GM12878 (cell line): ENCODE measurements at regions of chr22 and their contacts with region 1.

Region 1: DNA sequence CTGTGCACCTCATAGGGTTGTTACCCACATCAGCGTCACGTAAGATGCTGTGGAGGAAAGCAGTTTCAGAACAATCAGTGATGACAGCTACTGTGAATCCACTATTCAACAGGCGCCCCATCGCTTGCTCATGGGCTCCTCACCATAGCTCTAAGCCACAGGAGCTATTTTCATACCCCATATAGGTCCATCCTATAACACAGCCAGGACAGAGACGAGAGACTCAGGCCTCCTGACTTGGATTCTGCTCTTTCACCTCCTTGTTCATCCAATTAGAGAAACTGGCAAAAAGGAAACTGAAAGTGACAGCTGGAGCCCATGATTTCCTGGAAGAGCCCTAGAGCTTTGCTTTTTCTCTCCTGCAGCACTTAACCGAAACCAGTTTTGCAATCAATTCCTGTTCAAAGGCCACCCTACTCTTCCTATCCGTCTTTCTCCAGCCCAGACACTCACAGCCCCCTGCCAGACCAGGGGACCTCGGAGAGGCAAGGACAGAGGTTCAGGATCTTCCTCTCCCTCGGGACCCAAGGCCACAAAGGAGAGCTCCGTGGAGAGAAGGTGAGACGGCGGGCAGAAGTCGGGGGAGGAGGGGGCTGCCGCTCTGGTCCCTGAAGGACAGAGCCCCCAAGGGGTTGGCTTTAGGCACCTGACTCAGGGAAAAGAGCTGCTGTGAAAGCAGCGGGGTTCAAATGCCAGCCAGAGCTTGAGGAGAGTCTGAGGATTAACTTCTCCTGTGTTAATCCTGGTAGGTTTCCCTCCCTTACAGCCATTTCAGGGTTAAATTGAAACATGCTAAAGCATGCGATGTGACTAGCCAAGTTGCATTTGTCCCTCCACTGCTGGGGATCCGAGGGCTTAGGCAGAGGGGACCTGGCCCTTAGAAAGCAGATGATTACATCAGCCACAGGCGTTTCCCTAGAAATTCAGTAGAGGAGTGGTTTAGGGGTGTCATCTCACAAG is at the start of gene APOL6:
- DNase-seq: peak; percentile 65
- ATAC-seq: peak; percentile 79
- H3K4me3 ChIP-seq: peak within 1 kb of the TSS; percentile 91
- H3K27ac ChIP-seq: peak within 1 kb of the TSS; percentile 93
- H3K4me1 ChIP-seq: peaks cover 19% of the 10 kb centered on the region
- H3K27me3 ChIP-seq: no peaks in the 10 kb centered on the region
- CTCF ChIP-seq: no peak
- EP300 ChIP-seq: no peak
- POLR2A ChIP-seq: peak; percentile 65
- RAD21 ChIP-seq: no peak
- polyA plus RNA-seq, gene APOL6: 4.3 to 6.7 TPM

Region 2: DNA sequence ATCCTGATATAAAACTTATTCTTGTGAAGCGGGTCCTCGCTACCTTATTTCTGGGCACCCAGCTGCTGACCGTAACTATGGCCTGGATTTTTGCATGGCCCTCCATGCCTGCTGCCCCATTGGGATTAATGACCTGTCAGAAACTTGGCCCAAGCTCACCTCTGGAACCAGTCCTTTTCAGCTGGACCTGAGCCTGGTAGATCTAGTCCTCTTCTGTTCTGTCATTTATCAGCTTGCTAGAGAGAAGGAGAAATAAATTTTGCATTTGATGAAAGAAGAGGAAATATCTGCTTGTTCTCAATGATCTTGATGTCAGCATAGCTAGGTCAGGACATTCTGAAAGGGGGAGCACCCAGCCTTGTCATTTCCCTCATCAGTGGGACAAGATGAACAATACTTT is 1340.2 kb before region 1 on chr22:
- CTCF ChIA-PET with region 1: no interaction called
- POLR2A ChIA-PET with region 1: no interaction called
- RAD21 ChIA-PET with region 1: no interaction called
- SMC1A ChIA-PET with region 1: no interaction called
- in situ Hi-C with region 1: no loop called
- intact Hi-C with region 1: no loop called
- DNase-seq: no peak
- ATAC-seq: no peak
- H3K4me3 ChIP-seq: no peak overlapping the region
- H3K27ac ChIP-seq: no peak overlapping the region
- H3K4me1 ChIP-seq: no peaks in the 10 kb centered on the region
- H3K27me3 ChIP-seq: no peaks in the 10 kb centered on the region
- CTCF ChIP-seq: no peak
- EP300 ChIP-seq: no peak
- POLR2A ChIP-seq: no peak
- RAD21 ChIP-seq: no peak

Region 3: GRCh38 chr22:35615156-35615555 is 33.2 kb before region 1 on chr22:
- CTCF ChIA-PET with region 1: no interaction called
- POLR2A ChIA-PET with region 1: no interaction called
- RAD21 ChIA-PET with region 1: no interaction called
- SMC1A ChIA-PET with region 1: no interaction called
- in situ Hi-C with region 1: no loop called
- intact Hi-C with region 1: no loop called
- DNase-seq: no peak
- ATAC-seq: no peak
- H3K4me3 ChIP-seq: no peak overlapping the region
- H3K27ac ChIP-seq: no peak overlapping the region
- H3K4me1 ChIP-seq: peaks cover 10% of the 10 kb centered on the region; the same call in 1 of the 2 replicates
- H3K27me3 ChIP-seq: peaks cover 2% of the 10 kb centered on the region in 2 experiments; a peak in 3 of 4 replicates
- CTCF ChIP-seq: no peak
- EP300 ChIP-seq: no peak
- POLR2A ChIP-seq: no peak
- RAD21 ChIP-seq: no peak

Region 4: GRCh38 chr22:35634015-35634414 is 14.3 kb before region 1 on chr22:
- CTCF ChIA-PET with region 1: interaction called, 26 read pairs
- POLR2A ChIA-PET with region 1: interaction called, 3 read pairs
- RAD21 ChIA-PET with region 1: interaction called, 30 read pairs
- SMC1A ChIA-PET with region 1: interaction called, 12 read pairs
- in situ Hi-C with region 1: no loop called
- intact Hi-C with region 1: no loop called
- DNase-seq: no peak
- ATAC-seq: peak; percentile 7; the same call in 1 of the 3 replicates
- H3K4me3 ChIP-seq: no peak overlapping the region
- H3K27ac ChIP-seq: no peak overlapping the region
- H3K4me1 ChIP-seq: peaks cover 12% of the 10 kb centered on the region
- H3K27me3 ChIP-seq: no peaks in the 10 kb centered on the region
- CTCF ChIP-seq: no peak
- EP300 ChIP-seq: no peak
- POLR2A ChIP-seq: no peak
- RAD21 ChIP-seq: no peak

Region 5: GRCh38 chr22:35866651-35867050 is 218.3 kb after region 1 on chr22:
- CTCF ChIA-PET with region 1: no interaction called
- POLR2A ChIA-PET with region 1: no interaction called
- RAD21 ChIA-PET with region 1: no interaction called
- SMC1A ChIA-PET with region 1: no interaction called
- in situ Hi-C with region 1: no loop called
- intact Hi-C with region 1: no loop called
- DNase-seq: no peak
- ATAC-seq: no peak
- H3K4me3 ChIP-seq: no peak overlapping the region
- H3K27ac ChIP-seq: no peak overlapping the region
- H3K4me1 ChIP-seq: no peaks in the 10 kb centered on the region
- H3K27me3 ChIP-seq: peaks cover 0 to 6% of the 10 kb centered on the region in 2 experiments; a peak in 1 of 4 replicates
- CTCF ChIP-seq: no peak
- EP300 ChIP-seq: no peak
- POLR2A ChIP-seq: no peak
- RAD21 ChIP-seq: no peak